ENCODE measurements at regions of chr1 and their contacts with region 1.

Region 1: GRCh38 chr1:244918421-244919319 is 54.3 kb upstream of the HNRNPU start:
- DNase-seq: peak; percentile 22 to 43 (median 33)
- H3K4me3 ChIP-seq: peak overlapping the region; percentile 51 to 77 (median 72)
- H3K4me3 Mint-ChIP-seq: peak overlapping the region; percentile 92 to 97
- H3K27ac ChIP-seq: no peak overlapping the region
- H3K27ac Mint-ChIP-seq: peak overlapping the region in 6 of 7 donors; percentile 9 to 83 (median 57)
- H3K4me1 ChIP-seq: peaks cover 29 to 39% of the 10 kb centered on the region in 2 donors
- H3K4me1 Mint-ChIP-seq: peaks cover 29% of the 10 kb centered on the region
- H3K27me3 ChIP-seq: no peaks in the 10 kb centered on the region
- H3K27me3 Mint-ChIP-seq: no peaks in the 10 kb centered on the region
- CTCF ChIP-seq: no peak

Region 2: GRCh38 chr1:244678697-244679096 is 240.0 kb before region 1 on chr1:
- intact Hi-C with region 1: no loop called
- DNase-seq: no peak
- H3K4me3 ChIP-seq: no peak overlapping the region
- H3K4me3 Mint-ChIP-seq: no peak overlapping the region
- H3K27ac ChIP-seq: no peak overlapping the region
- H3K27ac Mint-ChIP-seq: peak overlapping the region in 1 of 7 donors; percentile 32
- H3K4me1 ChIP-seq: no peaks in the 10 kb centered on the region
- H3K4me1 Mint-ChIP-seq: peaks cover 17% of the 10 kb centered on the region
- H3K27me3 ChIP-seq: no peaks in the 10 kb centered on the region
- H3K27me3 Mint-ChIP-seq: peaks cover 0 to 1% (median 0%) of the 10 kb centered on the region in 3 donors
- CTCF ChIP-seq: no peak

Region 3: DNA sequence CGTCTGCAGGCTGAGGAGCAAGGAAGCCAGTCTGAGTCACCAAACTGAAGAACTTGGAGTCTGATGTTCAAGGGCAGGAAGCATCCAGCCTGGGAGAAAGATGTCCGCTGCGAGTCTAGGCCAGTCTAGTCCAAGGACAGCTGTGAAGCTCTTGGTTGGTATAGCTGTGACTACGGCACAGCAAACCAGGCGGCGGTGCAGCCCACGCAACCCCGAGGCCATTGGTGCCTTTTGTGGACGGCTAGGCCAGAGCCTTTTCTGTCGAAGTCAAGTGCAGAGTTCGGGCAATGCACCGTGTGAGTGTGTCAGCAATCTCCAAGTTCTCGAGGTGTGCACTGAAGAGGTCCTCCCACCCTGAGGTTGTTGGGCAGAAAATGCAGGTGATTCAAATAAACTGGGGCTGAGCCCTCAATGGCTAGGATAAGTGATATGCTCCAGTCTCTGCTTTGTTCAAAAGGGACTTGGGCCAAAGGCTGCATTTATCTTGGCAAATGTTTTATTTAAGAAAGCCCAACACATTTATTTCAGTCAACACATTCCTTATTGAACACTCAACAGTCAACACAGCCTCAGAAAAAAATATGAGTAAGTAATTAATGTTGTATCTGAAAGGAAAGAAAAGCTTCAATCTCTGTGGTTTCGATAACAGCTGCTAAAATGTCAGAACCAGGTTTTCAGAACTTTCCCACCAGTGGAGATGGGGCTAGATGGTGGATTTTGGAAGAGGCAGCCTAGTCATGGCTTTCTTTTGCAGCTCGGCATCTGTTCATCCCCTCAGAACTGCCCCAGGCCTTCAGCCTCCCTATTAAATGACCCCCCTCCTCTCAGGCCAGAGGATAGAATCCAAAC is 161.4 kb before region 1 on chr1:
- intact Hi-C with region 1: no loop called
- DNase-seq: no peak
- H3K4me3 ChIP-seq: no peak overlapping the region
- H3K4me3 Mint-ChIP-seq: no peak overlapping the region
- H3K27ac ChIP-seq: no peak overlapping the region
- H3K27ac Mint-ChIP-seq: peak overlapping the region in 1 of 7 donors; percentile 50
- H3K4me1 ChIP-seq: no peaks in the 10 kb centered on the region
- H3K4me1 Mint-ChIP-seq: no peaks in the 10 kb centered on the region
- H3K27me3 ChIP-seq: no peaks in the 10 kb centered on the region
- H3K27me3 Mint-ChIP-seq: peaks cover 2 to 7% (median 4%) of the 10 kb centered on the region in 3 donors
- CTCF ChIP-seq: no peak

Region 4: GRCh38 chr1:244957525-244957924 is 38.9 kb after region 1 on chr1:
- intact Hi-C with region 1: loop called in 1 of 2 experiments (anchors 5 kb)
- DNase-seq: peak in 1 of 3 donors; percentile 14
- H3K4me3 ChIP-seq: no peak overlapping the region
- H3K4me3 Mint-ChIP-seq: no peak overlapping the region
- H3K27ac ChIP-seq: no peak overlapping the region
- H3K27ac Mint-ChIP-seq: peak overlapping the region in 2 of 7 donors; percentile 9 to 50
- H3K4me1 ChIP-seq: peaks cover 25 to 26% of the 10 kb centered on the region in 2 donors
- H3K4me1 Mint-ChIP-seq: peaks cover 37% of the 10 kb centered on the region
- H3K27me3 ChIP-seq: no peaks in the 10 kb centered on the region
- H3K27me3 Mint-ChIP-seq: peaks cover 0 to 2% (median 0%) of the 10 kb centered on the region in 3 donors
- CTCF ChIP-seq: no peak